ENCODE measurements at regions of chr10 and their contacts with region 1.

Region 1: GRCh38 chr10:124957409-124957947 is 15.6 kb downstream of the ZRANB1 start:
- DNase-seq: no peak
- ATAC-seq: no peak
- H3K4me3 ChIP-seq: no peak overlapping the region
- H3K27ac ChIP-seq: no peak overlapping the region
- H3K4me1 ChIP-seq: peaks cover 17% of the 10 kb centered on the region
- H3K27me3 ChIP-seq: no peaks in the 10 kb centered on the region
- CTCF ChIP-seq: no peak
- EP300 ChIP-seq: no peak
- POLR2A ChIP-seq: no peak
- RAD21 ChIP-seq: no peak

Region 2: GRCh38 chr10:124875596-124875995 is 81.9 kb before region 1 on chr10:
- CTCF ChIA-PET with region 1: no interaction called
- POLR2A ChIA-PET with region 1: no interaction called
- RAD21 ChIA-PET with region 1: no interaction called
- SMC1A ChIA-PET with region 1: no interaction called
- in situ Hi-C with region 1: no loop called
- intact Hi-C with region 1: no loop called
- DNase-seq: no peak
- ATAC-seq: no peak
- H3K4me3 ChIP-seq: no peak overlapping the region
- H3K27ac ChIP-seq: no peak overlapping the region
- H3K4me1 ChIP-seq: no peaks in the 10 kb centered on the region
- H3K27me3 ChIP-seq: no peaks in the 10 kb centered on the region
- CTCF ChIP-seq: no peak
- EP300 ChIP-seq: no peak
- POLR2A ChIP-seq: no peak
- RAD21 ChIP-seq: no peak

Region 3: DNA sequence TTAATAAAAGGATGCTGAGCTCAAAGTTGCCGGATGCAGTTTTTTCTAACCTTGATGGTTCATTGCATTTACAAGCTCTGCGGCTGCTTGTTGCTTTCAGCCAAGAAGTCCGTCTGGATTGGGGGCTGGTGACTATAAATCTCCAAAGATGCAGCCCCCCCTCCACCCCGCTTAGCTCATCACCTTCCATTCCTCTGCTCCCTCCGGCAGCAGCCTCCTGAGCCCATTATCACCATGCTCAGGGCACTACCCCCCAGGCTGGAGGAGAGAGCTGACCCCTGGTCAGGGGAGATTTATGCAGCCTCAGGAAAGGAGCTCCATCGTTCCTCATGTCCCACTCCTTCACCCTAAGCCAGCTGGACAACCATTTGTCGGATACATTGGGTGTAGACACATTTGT is 70.9 kb before region 1 on chr10:
- CTCF ChIA-PET with region 1: no interaction called
- POLR2A ChIA-PET with region 1: no interaction called
- RAD21 ChIA-PET with region 1: no interaction called
- SMC1A ChIA-PET with region 1: no interaction called
- in situ Hi-C with region 1: no loop called
- intact Hi-C with region 1: no loop called
- DNase-seq: no peak
- ATAC-seq: no peak
- H3K4me3 ChIP-seq: no peak overlapping the region
- H3K27ac ChIP-seq: no peak overlapping the region
- H3K4me1 ChIP-seq: no peaks in the 10 kb centered on the region
- H3K27me3 ChIP-seq: no peaks in the 10 kb centered on the region
- CTCF ChIP-seq: no peak
- EP300 ChIP-seq: no peak
- POLR2A ChIP-seq: no peak
- RAD21 ChIP-seq: no peak

Region 4: GRCh38 chr10:124971276-124971675 is 13.8 kb after region 1 on chr10:
- CTCF ChIA-PET with region 1: interaction called, 4 read pairs
- POLR2A ChIA-PET with region 1: interaction called, 4 read pairs
- RAD21 ChIA-PET with region 1: interaction called, 5 read pairs
- SMC1A ChIA-PET with region 1: interaction called, 13 read pairs
- in situ Hi-C with region 1: no loop called
- intact Hi-C with region 1: no loop called
- DNase-seq: peak; percentile 51
- ATAC-seq: peak; percentile 54
- H3K4me3 ChIP-seq: peak overlapping the region; percentile 28
- H3K27ac ChIP-seq: peak overlapping the region; percentile 84
- H3K4me1 ChIP-seq: peaks cover 28% of the 10 kb centered on the region
- H3K27me3 ChIP-seq: no peaks in the 10 kb centered on the region
- CTCF ChIP-seq: no peak
- EP300 ChIP-seq: no peak
- POLR2A ChIP-seq: no peak
- RAD21 ChIP-seq: no peak

Measured in GM12878 (cell line).